HEK293T (cell line): ENCODE measurements at regions of chr1 and their contacts with region 1.

Region 1: GRCh38 chr1:202890392-202890791 is 1.4 kb upstream of the RABIF start:
- DNase-seq: no peak

Region 2: GRCh38 chr1:202835548-202836090 is 54.8 kb before region 1 on chr1:
- CTCF ChIA-PET with region 1: no interaction called
- POLR2A ChIA-PET with region 1: no interaction called
- DNase-seq: no peak

Region 3: DNA sequence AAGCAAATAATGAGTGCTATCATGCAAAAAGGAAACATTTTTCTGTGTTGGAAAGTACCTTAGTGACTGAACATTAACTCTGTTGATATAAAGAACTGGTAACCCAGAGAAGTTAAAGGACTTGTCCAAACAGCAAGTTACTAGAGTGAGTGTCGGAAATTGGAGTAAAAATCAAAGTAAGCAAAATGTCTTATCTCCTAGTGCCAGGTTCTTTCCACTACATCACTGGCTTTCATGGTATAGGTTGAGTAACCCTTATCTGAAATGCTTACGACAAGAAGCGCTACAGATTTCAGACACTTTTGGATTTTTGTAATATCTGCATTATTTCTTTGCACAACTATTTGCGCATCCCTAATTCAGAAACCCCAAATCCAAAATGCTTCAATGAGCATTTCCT is 14.9 kb after region 1 on chr1:
- CTCF ChIA-PET with region 1: no interaction called
- POLR2A ChIA-PET with region 1: no interaction called
- DNase-seq: no peak

Region 4: DNA sequence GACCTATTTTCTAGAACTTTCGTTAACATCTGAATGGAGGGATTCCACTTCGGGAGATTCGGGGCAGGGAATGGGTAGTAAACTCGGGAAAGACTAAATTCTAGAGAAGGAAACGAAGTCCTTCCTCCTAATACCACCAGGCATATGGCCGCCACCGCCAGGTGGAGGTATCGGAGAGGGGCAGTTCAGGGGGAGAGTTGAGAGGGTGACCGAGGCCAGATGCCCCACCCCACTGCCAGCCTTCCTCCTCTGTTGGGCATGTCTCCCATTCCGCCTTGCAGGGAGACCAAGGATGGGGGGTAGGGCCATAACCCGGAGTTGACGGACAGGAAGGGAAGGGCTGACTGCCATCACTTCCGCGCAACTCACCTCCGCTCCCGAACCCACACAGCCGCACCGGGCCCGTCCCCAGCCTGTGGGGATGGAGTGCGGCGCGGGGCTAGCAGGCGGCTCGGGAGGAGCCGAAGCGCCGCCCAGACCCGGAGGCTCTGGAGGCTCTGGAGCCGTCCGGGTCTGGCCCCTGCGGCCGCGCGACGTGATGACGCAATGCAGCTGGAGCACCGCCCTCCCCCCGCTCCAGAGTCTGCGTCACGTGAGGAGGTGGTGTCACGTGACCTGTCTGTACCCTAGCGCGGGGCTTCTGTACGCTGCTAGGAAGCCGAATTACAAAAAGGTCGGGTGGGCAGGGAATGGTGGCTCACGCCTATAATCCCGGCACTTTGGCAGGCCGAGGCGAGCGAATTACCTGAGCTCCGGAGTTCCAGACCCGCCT is 36.5 kb after region 1 on chr1 and contains the start of gene KLHL12:
- CTCF ChIA-PET with region 1: interaction called, 13 read pairs
- POLR2A ChIA-PET with region 1: interaction called, 6 read pairs
- DNase-seq: peak; percentile 99